ENCODE measurements at regions of chr17 and their contacts with region 1.

Region 1: DNA sequence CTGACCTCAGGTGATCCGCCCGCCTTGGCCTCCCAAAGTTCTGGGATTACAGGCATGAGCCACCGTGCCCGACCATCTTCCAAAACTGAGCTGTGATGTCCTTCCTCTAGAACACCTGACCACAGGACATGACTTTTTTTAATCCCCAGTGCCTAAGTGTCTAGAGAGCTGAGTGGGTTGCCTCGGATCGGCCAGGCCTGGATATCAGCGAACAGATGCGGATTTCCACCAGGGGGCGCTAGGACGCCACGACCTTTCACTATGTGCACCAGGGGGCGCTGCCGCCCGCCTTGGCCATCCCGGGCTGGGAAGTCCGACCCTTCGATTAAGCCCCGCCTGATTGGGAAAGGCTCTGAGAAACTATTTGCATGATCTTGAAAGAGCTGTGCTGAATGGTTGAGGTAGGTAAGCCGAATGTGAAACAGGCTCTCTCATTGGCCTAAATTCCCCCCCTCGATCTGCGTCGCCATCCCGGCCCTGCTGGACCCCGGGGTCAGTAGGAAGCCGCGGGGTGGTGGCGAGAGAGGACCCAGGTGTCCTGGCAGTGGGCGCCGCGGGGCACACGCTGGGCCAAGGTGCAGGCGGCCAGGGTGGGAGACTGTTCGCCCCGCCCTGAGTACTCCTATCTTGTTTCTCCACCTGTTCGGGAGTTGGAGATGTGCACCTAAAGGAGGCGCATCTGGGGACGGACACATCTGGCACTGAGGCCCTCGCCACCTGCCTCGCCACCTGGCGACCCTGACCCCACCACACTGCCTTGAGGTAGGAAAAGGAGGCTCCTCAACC is at the start of gene ACBD4:
- DNase-seq: peak; percentile 99 to 100
- ATAC-seq: peak; percentile 59 to 78
- H3K4me3 ChIP-seq: peak within 1 kb of the TSS; percentile 55
- H3K27ac ChIP-seq: peak within 1 kb of the TSS; percentile 82 to 93
- H3K4me1 ChIP-seq: peaks cover 33% of the 10 kb centered on the region
- CTCF ChIP-seq: peak; percentile 100
- EP300 ChIP-seq: no peak
- POLR2A ChIP-seq: peak; percentile 77
- RAD21 ChIP-seq: peak; percentile 99 to 100
- polyA plus RNA-seq, gene ACBD4: 11.2 and 11.4 TPM in 2 replicates

Region 2: GRCh38 chr17:44899069-44899782 is 236.2 kb before region 1 on chr17 and contains the start of gene EFTUD2:
- CTCF ChIA-PET with region 1: interaction called, 11 read pairs
- POLR2A ChIA-PET with region 1: no interaction called
- DNase-seq: peak; percentile 94 to 96
- ATAC-seq: peak; percentile 83 to 85
- H3K4me3 ChIP-seq: peak within 1 kb of the TSS; percentile 65
- H3K27ac ChIP-seq: peak within 1 kb of the TSS; percentile 87 to 96
- H3K4me1 ChIP-seq: peaks cover 37% of the 10 kb centered on the region
- CTCF ChIP-seq: no peak
- EP300 ChIP-seq: peak in 1 of 2 experiments; percentile 25; a peak in 1 of 5 replicates
- POLR2A ChIP-seq: peak; percentile 85
- RAD21 ChIP-seq: peak in 1 of 2 experiments; percentile 18; a peak in 2 of 5 replicates
- polyA plus RNA-seq, gene EFTUD2: 254 and 353 TPM in 2 replicates

Region 3: GRCh38 chr17:45021607-45022287 is 113.6 kb before region 1 on chr17:
- CTCF ChIA-PET with region 1: interaction called, 19 read pairs
- POLR2A ChIA-PET with region 1: no interaction called
- DNase-seq: peak; percentile 67 to 93
- ATAC-seq: peak; percentile 63 to 86
- H3K4me3 ChIP-seq: peak overlapping the region; percentile 16; the same call in 1 of the 3 replicates
- H3K27ac ChIP-seq: peak overlapping the region; percentile 55 to 76
- H3K4me1 ChIP-seq: peaks cover 24% of the 10 kb centered on the region
- CTCF ChIP-seq: peak; percentile 99
- EP300 ChIP-seq: no peak
- POLR2A ChIP-seq: no peak; the same call in 1 of the 2 replicates
- RAD21 ChIP-seq: peak; percentile 76 to 96

Region 4: DNA sequence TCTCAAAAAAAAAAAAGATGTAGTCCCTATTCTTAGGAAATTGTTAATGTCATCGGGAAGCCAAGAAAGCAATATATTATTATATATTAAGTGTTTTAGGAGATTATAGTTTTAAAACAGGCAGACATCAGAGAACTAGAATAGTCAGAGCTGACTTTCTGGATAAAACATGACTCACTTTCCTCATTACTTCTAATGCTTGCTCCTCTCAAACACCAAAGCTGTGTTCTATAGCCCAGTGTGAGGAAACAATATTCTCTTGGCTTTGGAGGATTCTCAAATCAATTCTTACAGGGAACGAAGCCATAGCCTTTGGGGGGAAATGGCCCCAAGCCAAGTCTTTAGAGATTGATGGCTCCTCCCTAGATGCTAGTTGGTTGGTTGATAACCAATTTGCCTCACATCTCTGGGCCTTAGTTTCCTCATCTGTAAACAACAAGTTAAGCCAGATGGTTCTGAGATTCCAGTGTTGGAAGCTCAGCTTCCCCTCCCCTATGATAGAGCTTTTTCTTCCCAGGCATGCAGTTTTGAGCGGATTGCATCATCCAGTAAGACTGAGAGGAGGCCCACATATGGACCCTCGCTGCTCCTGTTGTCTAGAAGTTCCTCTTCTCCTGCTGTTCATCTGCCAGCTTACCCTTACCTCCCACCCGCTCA is 61.8 kb before region 1 on chr17:
- CTCF ChIA-PET with region 1: interaction called, 19 read pairs
- POLR2A ChIA-PET with region 1: no interaction called
- DNase-seq: no peak
- ATAC-seq: no peak
- H3K4me3 ChIP-seq: no peak overlapping the region
- H3K27ac ChIP-seq: peak overlapping the region; percentile 32 to 62; a peak in 4 of 6 replicates
- H3K4me1 ChIP-seq: peaks cover 12% of the 10 kb centered on the region; the same call in 2 of the 3 replicates
- CTCF ChIP-seq: no peak
- EP300 ChIP-seq: no peak
- POLR2A ChIP-seq: no peak
- RAD21 ChIP-seq: no peak

Region 5: DNA sequence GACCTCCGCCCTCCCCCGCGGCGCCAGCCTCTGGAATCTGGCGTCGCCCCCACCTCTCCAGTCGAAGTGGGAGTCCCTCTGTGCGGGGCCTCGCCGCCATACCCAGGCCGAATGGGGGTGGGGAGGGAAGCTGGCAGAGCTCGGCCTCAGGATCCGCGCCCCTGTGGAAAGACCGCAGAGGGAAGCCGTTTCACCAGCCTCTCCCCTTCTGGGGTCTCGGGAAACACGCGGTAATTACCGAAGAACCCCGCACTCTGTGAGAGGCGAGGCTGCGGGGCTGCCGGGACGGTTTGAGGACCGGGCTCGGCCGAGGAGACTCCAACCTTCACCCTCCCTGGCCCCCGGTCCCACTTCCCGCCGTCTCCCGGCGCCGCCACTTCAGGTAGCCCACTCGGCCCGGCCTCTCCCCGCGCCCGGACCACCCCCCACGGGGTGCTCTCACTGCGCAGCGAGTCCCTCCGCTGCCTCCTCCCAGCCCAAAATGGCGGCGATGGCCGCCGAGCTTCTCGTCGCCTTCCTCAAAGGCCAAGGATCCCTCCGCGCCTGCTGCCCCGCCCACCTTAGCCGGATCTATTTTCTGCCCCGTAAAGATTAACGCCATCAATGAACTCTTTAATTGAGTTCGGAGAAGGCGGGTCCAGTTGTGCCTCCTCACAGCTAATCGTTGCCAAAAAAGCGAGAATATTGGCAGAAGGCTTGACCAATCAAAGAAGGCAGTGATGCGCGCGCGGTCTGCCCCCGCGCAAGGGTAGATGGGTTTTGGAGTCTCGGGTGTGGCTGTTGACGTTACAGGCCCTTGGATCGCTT is 25.8 kb after region 1 on chr17:
- CTCF ChIA-PET with region 1: interaction called, 659 read pairs
- POLR2A ChIA-PET with region 1: interaction called, 14 read pairs
- DNase-seq: peak; percentile 98 to 100
- ATAC-seq: peak; percentile 95 to 96
- H3K4me3 ChIP-seq: peak overlapping the region; percentile 81
- H3K27ac ChIP-seq: peak overlapping the region; percentile 98 to 99
- H3K4me1 ChIP-seq: peaks cover 39% of the 10 kb centered on the region
- CTCF ChIP-seq: no peak; the same call in 1 of the 3 replicates
- EP300 ChIP-seq: no peak
- POLR2A ChIP-seq: peak; percentile 48
- RAD21 ChIP-seq: no peak; a peak in 2 of 5 replicates

Region 6: DNA sequence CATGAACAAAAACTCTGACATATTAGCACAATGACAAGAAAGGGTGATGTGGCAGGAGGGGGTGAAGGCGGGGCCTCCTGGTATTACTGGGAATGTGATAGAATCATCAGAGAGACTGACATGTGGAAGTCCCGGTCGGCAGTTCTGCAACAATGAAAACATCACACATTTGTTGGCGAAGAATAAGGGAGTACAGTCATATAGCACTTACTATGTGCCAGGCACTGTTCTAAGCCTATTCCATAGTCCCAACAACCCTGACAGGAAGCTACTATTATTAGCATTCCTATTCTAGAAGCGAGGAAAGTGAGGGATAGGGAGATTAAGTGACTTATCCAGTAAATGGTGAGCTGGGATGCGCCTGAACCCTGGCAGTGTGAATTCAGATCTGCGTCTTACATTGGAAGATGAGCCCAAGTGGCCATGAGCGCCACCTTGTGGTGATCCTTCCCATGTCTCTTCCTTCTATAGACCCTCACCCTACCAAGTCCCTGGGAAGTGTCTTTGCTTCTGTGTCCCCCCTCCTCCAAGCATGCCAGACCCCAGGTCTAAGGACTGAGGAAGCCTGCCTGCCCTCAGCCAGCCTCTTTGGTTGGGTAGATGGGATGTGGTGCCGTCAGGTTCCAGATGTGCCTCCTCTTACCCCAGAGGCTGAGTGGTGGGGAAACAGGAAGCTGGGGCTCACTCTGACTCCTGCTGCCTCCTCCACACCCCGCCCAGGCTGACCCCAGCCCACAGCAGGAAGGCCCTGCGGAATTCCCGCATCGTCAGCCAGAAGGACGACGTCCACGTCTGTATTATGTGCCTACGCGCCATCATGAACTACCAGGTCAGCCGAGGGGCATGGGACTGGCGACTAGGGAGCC is 100.3 kb after region 1 on chr17:
- CTCF ChIA-PET with region 1: interaction called, 202 read pairs
- POLR2A ChIA-PET with region 1: no interaction called
- DNase-seq: peak; percentile 87 to 93
- ATAC-seq: peak; percentile 60 to 75
- H3K4me3 ChIP-seq: no peak overlapping the region
- H3K27ac ChIP-seq: peak overlapping the region; percentile 35 to 66; a peak in 5 of 6 replicates
- H3K4me1 ChIP-seq: peaks cover 33% of the 10 kb centered on the region
- CTCF ChIP-seq: peak; percentile 95
- EP300 ChIP-seq: no peak
- POLR2A ChIP-seq: no peak
- RAD21 ChIP-seq: peak; percentile 79 to 82

Region 7: GRCh38 chr17:45307290-45308015 is 172.1 kb after region 1 on chr17:
- CTCF ChIA-PET with region 1: interaction called, 6 read pairs
- POLR2A ChIA-PET with region 1: interaction called, 11 read pairs
- DNase-seq: peak in 1 of 2 experiments; percentile 69
- ATAC-seq: peak; percentile 16 to 28; a peak in 5 of 6 replicates
- H3K4me3 ChIP-seq: peak overlapping the region; percentile 10; the same call in 1 of the 3 replicates
- H3K27ac ChIP-seq: peak overlapping the region; percentile 77 to 92
- H3K4me1 ChIP-seq: peaks cover 92% of the 10 kb centered on the region
- CTCF ChIP-seq: no peak
- EP300 ChIP-seq: no peak
- POLR2A ChIP-seq: no peak
- RAD21 ChIP-seq: no peak

Measured in A549 (cell line).